ENCODE measurements at regions of chr3 and their contacts with region 1.

Region 1: DNA sequence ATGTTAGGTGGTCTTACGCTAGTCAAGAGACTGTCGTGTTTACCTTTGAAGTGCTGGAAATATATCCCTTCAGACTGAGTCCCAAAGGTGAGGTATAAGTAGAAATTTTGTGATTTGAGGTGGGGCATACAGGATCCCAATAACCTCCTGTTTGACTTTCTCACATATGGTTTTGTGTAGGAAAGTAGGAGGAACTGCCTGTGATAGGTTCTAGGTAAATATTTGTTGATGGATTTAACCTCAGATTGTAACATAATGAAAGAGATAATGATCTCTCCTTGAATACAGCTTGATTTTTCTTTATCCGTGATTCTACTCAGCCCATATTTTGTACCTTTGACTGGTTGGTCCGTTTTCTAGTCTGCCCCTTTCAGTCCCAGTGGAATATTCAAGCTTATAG is 24.3 kb upstream of the SCAANT1 start:
- DNase-seq: no peak
- ATAC-seq: no peak
- H3K4me3 ChIP-seq: no peak overlapping the region
- H3K4me3 Mint-ChIP-seq: no peak overlapping the region
- H3K27ac ChIP-seq: no peak overlapping the region
- H3K27ac Mint-ChIP-seq: peak overlapping the region in 1 of 2 donors; percentile 9
- H3K4me1 ChIP-seq: peaks cover 9 to 16% of the 10 kb centered on the region in 2 experiments
- H3K4me1 Mint-ChIP-seq: peaks cover 63 to 84% (median 78%) of the 10 kb centered on the region in 3 donors
- H3K27me3 ChIP-seq: no peaks in the 10 kb centered on the region
- H3K27me3 Mint-ChIP-seq: no peaks in the 10 kb centered on the region

Region 2: DNA sequence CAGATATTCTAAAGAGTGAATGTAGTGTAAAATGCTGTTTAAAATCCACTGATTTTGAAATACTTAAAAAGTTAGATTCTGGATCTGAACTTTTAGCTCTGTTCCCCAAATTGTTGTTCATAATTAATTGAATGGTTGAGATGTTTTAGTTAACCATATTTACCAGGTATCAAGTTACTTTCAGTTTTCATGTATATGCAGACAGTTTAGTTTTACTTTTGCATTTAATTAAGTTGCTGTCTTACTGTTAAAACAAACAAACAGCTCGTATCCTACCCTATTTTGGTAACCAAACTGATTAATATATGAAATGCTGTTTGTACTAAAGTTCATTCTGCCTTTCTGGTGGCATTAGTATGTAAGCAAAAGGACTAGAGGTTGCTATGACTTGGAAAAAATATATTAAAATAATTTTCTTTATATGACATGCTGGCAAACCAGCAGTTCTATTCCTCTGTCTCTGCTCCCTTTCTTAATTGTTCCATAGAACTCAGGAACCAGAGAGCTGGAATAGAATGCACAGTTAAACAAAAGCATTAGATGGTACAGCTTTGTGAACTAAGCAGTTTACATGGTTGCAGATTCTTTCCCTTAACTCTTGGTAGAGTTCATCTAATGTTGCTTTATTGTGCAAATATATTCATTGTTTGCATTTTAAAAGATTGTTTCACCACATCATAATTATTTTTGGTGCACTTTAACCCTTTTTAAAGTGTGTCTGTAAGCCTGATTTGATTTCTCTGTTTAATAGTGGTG is 15.2 kb after region 1 on chr3:
- CTCF ChIA-PET with region 1: interaction called, 3 read pairs
- POLR2A ChIA-PET with region 1: interaction called, 4 to 10 read pairs
- DNase-seq: no peak
- ATAC-seq: peak in 1 of 4 experiments; percentile 47
- H3K4me3 ChIP-seq: no peak overlapping the region
- H3K4me3 Mint-ChIP-seq: peak overlapping the region; percentile 40 to 60 (median 50)
- H3K27ac ChIP-seq: peak overlapping the region; percentile 55
- H3K27ac Mint-ChIP-seq: peak overlapping the region; percentile 75 to 83
- H3K4me1 ChIP-seq: peaks cover 2 to 15% of the 10 kb centered on the region in 2 experiments
- H3K4me1 Mint-ChIP-seq: peaks cover 42 to 56% (median 56%) of the 10 kb centered on the region in 3 donors
- H3K27me3 ChIP-seq: no peaks in the 10 kb centered on the region
- H3K27me3 Mint-ChIP-seq: no peaks in the 10 kb centered on the region

Region 3: DNA sequence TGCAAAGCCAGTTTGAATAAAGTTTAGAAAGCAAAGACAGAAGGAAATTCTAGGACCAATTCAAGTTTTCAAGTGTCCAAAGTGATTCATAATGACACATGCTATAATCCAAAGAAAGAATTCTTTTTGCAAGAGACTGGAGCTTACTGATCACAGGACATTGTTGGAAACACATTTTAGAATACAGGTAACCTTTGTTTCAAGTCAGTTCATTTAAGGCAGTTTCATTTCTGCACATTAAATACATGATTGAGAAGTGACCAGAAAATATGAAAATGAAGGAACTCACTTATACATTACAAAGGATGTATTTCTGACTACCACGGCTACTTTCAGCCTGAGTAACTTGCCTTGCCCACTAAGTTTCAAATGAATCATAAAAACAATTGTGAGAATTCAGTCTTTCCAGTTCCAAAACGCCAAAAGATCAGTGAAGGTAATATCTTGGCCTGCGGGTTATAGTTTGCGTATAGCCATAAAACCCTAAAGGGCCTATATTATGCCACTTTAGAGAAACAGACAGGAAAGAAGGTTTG is 240.0 kb after region 1 on chr3:
- CTCF ChIA-PET with region 1: no interaction called
- POLR2A ChIA-PET with region 1: no interaction called
- DNase-seq: no peak
- ATAC-seq: no peak
- H3K4me3 ChIP-seq: no peak overlapping the region
- H3K4me3 Mint-ChIP-seq: no peak overlapping the region
- H3K27ac ChIP-seq: no peak overlapping the region
- H3K27ac Mint-ChIP-seq: no peak overlapping the region
- H3K4me1 ChIP-seq: no peaks in the 10 kb centered on the region
- H3K4me1 Mint-ChIP-seq: no peaks in the 10 kb centered on the region
- H3K27me3 ChIP-seq: no peaks in the 10 kb centered on the region
- H3K27me3 Mint-ChIP-seq: peaks cover 6 to 18% of the 10 kb centered on the region in 2 donors

Measured in T-cell (primary cell).